Lower leg skin (tissue), 4 donors: ENCODE measurements at regions of chr11 and their contacts with region 1.

Region 1: DNA sequence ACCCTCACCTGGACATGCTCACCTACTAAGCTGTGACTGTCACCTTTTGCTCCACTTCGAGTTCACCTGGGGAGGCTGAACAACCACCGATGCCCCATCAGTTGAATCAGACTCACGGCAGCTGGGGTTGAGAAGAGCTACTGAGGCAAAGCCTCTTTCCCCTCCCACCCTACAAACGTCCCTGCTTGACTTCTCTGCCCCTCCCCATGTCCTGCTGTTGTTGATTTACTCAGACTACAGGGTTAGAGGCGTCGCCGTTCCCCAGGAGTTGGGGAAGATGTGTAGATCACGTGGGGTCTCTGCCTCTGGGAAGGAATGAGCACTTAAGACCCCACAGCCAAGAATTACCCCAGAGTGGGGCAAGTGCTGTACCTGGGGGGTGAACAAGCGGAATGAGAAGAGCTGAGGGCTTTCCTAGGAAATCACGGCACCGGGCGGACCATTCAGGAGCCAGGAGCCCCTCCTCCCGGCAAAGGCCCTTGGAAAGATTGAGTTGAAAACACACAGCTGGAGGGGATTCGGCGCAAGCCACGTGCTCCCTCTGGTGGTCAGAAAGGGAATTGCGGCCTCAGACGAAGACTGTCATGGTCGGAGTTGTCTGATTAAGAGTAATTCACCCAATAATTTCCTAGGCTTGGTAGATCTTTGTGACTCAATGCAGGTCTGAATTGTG is 7.0 kb downstream of the FXYD2 start:
- DNase-seq: peak; percentile 74 to 97
- H3K4me3 ChIP-seq: no peak overlapping the region
- CTCF ChIP-seq: peak in 2 of 3 donors; percentile 80 to 98
- POLR2A ChIP-seq: no peak

Region 2: GRCh38 chr11:117426269-117426685 is 391.2 kb before region 1 on chr11:
- intact Hi-C with region 1: loop called (anchors 5 kb)
- DNase-seq: peak; percentile 26 to 92
- H3K4me3 ChIP-seq: no peak overlapping the region
- CTCF ChIP-seq: peak in 1 of 3 donors; percentile 72
- POLR2A ChIP-seq: no peak

Region 3: DNA sequence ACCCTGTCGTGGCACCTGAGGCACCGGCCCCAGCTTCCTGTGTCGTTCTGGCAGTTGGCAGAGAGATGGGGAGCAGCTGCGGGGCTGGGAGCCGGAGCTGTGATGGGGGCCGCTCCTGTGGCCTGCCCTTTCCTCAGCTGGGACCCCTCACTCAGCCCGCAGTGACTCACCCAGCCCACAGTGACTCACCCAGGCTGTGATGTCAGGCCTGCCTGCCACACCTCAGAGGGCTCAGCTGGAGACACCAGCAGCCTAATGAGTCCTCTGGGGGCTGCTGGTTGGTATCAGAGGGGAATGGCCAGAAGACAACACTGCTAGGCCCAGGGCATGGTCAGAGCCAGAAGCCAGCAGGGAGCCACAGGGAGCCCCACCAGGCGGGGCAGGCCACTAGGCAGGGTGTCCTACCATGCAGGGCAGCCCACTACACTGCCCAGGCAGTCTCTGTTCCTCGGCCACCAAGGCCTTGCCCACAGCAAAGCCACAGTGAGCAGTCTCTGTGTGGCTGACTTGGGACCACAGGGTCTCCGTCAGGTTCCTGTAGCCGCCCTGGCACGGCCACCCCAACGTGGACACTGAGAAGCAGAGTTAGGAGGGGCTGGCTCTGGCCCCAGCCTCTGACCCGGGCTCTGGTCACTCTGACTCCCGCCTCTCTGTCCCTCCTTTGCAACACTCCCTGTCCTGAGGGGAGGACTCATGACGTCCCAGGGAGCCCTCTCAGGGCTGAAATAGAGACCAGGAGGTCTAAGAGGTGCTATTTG is 11.3 kb after region 1 on chr11:
- intact Hi-C with region 1: no loop called
- DNase-seq: peak in 1 of 2 donors; percentile 90
- H3K4me3 ChIP-seq: no peak overlapping the region
- CTCF ChIP-seq: no peak
- POLR2A ChIP-seq: no peak

Region 4: GRCh38 chr11:118010738-118011461 is 193.4 kb after region 1 on chr11:
- intact Hi-C with region 1: no loop called
- DNase-seq: peak in 1 of 2 donors; percentile 71
- H3K4me3 ChIP-seq: no peak overlapping the region
- CTCF ChIP-seq: no peak
- POLR2A ChIP-seq: no peak

Region 5: DNA sequence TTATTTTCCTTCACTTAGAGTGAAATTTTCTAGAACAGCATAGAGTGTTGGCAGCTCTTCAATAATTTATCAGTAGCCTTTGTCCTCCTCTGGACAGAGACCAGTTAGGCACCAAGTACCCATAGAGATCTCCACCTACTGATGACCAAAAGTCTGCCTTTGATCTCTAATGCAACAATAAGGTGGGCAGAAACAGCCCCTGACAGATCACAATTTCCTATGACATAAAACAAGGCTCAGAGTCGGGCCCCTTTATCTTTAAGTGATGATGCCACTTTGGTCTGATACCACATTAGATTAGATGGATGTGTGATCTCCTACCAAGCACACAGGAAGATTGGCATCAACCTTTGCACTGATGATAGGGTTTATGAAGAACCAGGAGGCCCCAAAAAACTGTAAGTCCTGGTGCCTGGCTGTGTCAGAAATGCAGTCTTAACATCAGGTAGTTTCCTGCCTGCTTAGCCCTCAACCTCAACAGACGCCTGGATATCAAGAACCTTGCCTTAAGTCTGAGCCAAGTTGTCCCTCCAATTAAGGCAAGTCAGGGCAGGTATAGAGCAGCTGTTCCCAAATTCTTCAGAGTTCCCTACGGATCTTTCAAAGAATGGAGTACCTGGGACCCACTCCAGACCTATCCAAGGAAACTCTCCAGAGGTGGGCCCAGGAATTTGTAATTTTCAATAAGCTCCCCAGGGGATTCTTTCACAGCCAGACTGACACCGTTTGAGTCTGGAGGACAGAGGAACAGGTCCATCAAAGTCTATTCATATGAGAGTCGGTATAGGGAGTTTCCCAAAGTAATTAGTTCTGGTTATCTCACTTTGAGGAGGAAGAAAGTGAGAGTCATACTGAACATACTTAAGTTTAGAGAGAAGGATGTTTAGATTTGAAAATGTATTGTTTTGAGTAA is 228.8 kb after region 1 on chr11:
- intact Hi-C with region 1: loop called (anchors 10 kb)
- DNase-seq: no peak
- H3K4me3 ChIP-seq: no peak overlapping the region
- CTCF ChIP-seq: no peak
- POLR2A ChIP-seq: no peak